Natural killer cell (primary cell): ENCODE measurements at regions of chr13 and their contacts with region 1.

Region 1: DNA sequence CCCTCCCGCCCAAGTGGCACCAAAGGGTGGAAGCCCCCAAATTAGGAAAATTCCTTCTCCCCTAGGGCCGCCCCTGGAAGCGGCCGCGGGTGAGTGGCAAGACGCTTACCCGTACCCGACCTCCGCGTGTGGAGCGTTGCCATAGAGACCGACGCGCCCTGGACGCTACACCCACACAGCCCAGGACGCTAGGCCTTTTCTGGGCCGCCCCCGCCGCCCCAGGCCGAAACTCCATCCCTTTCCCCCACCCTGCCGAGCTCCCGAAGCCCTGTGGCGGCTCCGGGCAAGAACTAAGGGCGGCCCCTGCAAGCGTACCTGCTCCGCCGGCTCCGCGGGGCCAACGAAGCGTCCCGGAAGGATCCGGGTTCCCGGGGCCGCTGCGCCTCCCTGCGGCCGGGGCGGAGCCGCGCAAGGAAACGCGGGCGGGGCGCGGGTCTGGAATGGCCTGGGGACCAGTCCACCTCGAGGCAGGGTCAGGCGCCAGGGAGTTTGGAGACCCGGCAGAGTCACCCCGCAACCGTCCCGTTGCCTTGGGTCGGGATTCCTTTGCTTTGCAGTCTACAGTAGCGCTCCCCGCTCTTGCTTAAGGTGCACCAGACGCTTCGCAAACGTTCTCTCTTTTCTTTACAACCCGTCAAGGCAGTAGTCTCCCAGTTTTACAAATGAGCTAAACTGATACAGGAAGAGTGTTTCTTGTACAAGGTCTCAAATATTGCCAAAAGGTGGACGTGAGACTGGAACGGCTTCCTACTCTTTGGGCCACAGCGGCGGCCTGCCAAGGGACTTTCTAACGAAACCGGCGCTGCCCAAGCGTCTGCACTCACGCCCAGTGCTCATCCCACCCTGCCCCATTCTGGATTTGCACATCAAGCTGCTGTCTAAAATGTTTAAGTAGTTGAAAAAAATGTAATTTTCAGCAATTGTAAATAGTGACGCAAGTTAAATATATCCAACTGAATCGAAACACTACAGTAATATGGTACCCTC is at the start of gene NEK5:
- DNase-seq: peak; percentile 41 to 69
- ATAC-seq: peak; percentile 67 to 81 (median 74)
- H3K4me3 ChIP-seq: peak within 1 kb of the TSS; percentile 48
- H3K4me3 Mint-ChIP-seq: peak within 1 kb of the TSS; percentile 88
- H3K27ac ChIP-seq: no peak within 1 kb of the TSS
- H3K27ac Mint-ChIP-seq: peak within 1 kb of the TSS in 1 of 2 donors; percentile 9
- H3K4me1 ChIP-seq: peaks cover 17% of the 10 kb centered on the region
- H3K4me1 Mint-ChIP-seq: peaks cover 12 to 22% of the 10 kb centered on the region in 2 donors
- H3K27me3 ChIP-seq: peaks cover 10% of the 10 kb centered on the region
- H3K27me3 Mint-ChIP-seq: peaks cover 13 to 18% of the 10 kb centered on the region in 2 donors
- CTCF ChIP-seq: peak; percentile 55
- total RNA-seq, gene NEK5: 0.13 TPM in 1 of 3 donors, not detected in the others

Region 2: DNA sequence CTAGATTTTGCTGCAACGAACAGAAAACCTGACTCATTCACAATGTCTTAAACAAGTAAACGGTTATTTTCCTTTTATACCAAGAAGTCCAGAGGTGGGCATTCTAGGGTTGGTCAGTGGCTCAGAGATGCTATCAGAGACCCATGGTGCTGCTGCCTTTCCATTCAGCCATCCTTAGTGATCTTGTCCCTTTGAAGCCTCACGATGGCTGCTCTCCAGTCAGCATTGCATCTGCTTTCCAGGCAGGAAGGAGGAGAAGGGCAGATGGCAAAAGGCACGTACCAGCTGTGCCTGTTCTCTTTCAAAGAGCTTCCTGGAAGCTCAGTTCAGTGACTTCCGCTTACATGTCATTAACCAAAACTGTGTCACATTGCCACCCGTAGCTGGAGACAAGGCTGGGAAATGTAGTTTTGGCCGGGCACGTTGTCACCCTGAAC is 514.6 kb before region 1 on chr13:
- intact Hi-C with region 1: no loop called
- DNase-seq: peak in 1 of 2 donors; percentile 75
- ATAC-seq: peak; percentile 73 to 95 (median 94)
- H3K4me3 ChIP-seq: peak overlapping the region; percentile 2
- H3K4me3 Mint-ChIP-seq: peak overlapping the region; percentile 85
- H3K27ac ChIP-seq: peak overlapping the region; percentile 56
- H3K27ac Mint-ChIP-seq: peak overlapping the region; percentile 85 to 92
- H3K4me1 ChIP-seq: peaks cover 4% of the 10 kb centered on the region
- H3K4me1 Mint-ChIP-seq: peaks cover 19 to 24% of the 10 kb centered on the region in 2 donors
- H3K27me3 ChIP-seq: no peaks in the 10 kb centered on the region
- H3K27me3 Mint-ChIP-seq: no peaks in the 10 kb centered on the region
- CTCF ChIP-seq: no peak

Region 3: DNA sequence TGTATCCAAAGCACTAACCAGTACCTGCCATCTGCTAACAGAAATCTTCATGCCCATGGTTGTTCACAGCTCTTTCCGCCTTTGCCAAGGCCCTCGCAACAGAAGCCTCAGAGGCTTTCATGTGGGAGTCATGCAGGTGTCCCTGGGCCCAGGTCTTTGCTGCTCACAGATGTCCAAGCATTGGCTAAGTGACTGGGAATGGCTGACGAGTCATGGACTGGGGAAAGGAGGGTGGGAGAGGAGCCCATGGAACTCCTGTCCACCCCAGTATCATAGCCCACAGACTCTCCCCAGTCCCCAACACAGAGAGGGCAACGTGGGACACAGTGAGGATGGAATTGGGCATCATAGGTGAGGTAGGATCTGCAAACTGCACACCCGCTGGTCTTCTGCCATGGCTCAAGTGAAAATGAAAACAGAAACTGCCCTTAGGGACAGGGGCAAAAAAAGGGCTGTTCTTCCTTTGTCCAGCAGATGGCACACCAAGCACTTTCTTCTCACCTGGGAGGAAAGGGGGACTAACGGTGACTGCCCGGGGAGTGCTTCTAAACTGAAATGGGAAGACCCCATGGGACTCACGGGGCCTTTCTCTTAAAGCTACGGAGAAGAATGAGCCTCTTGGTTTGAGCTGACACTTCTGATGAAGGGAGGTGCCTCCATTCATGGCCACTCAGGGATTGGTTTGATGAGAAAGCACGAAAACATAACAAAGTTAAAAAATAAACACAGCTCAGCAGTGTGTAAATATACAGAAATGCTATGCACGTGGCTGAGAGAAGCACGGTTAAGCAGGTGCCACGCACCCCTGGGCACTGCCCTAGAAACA is 314.0 kb before region 1 on chr13:
- intact Hi-C with region 1: loop called (anchors 1 kb)
- DNase-seq: peak; percentile 60 to 91
- ATAC-seq: peak; percentile 87 to 91 (median 88)
- H3K4me3 ChIP-seq: no peak overlapping the region
- H3K4me3 Mint-ChIP-seq: peak overlapping the region; percentile 21
- H3K27ac ChIP-seq: no peak overlapping the region
- H3K27ac Mint-ChIP-seq: peak overlapping the region; percentile 60 to 78
- H3K4me1 ChIP-seq: peaks cover 31% of the 10 kb centered on the region
- H3K4me1 Mint-ChIP-seq: peaks cover 18 to 23% of the 10 kb centered on the region in 2 donors
- H3K27me3 ChIP-seq: no peaks in the 10 kb centered on the region
- H3K27me3 Mint-ChIP-seq: peaks cover 7 to 9% of the 10 kb centered on the region in 2 donors
- CTCF ChIP-seq: peak; percentile 85

Region 4: GRCh38 chr13:51895906-51896888 is 232.8 kb before region 1 on chr13:
- intact Hi-C with region 1: loop called (anchors 5 kb)
- DNase-seq: peak in 1 of 2 donors; percentile 65
- ATAC-seq: peak in 2 of 3 donors; percentile 49 to 66
- H3K4me3 ChIP-seq: no peak overlapping the region
- H3K4me3 Mint-ChIP-seq: no peak overlapping the region
- H3K27ac ChIP-seq: no peak overlapping the region
- H3K27ac Mint-ChIP-seq: no peak overlapping the region
- H3K4me1 ChIP-seq: no peaks in the 10 kb centered on the region
- H3K4me1 Mint-ChIP-seq: no peaks in the 10 kb centered on the region
- H3K27me3 ChIP-seq: no peaks in the 10 kb centered on the region
- H3K27me3 Mint-ChIP-seq: peaks cover 15 to 31% of the 10 kb centered on the region in 2 donors
- CTCF ChIP-seq: peak; percentile 16

Region 5: DNA sequence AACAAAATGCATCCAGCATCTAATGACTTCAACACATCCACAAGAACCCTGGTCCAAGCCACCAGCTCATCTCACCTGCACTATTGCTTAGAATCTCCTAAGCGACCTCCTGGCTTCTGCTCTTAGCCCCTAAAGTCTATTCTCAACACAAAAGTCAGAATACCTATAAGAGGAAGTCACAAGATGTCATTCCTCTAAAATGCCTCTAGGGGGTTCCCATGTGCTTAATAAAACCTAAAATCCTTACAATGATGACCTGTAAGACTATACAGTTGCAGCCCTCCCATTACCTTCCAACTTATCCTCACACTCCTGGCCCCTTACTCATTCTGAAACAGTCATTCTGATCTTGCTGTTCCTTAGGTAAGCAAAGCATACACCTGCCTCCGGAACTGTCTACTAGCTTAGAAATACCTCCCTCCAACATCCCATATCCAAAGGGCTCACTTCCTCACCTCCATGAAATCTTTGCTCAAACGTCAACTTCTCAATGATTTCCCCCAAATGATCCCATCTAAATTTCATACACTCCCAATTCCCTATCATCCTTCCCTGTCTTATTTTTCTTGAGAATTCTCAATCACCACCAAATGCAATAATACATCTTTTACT is 127.8 kb before region 1 on chr13:
- intact Hi-C with region 1: loop called (anchors 1 kb)
- DNase-seq: peak in 1 of 2 donors; percentile 64
- ATAC-seq: peak; percentile 65 to 92 (median 87)
- H3K4me3 ChIP-seq: no peak overlapping the region
- H3K4me3 Mint-ChIP-seq: no peak overlapping the region
- H3K27ac ChIP-seq: no peak overlapping the region
- H3K27ac Mint-ChIP-seq: no peak overlapping the region
- H3K4me1 ChIP-seq: no peaks in the 10 kb centered on the region
- H3K4me1 Mint-ChIP-seq: no peaks in the 10 kb centered on the region
- H3K27me3 ChIP-seq: no peaks in the 10 kb centered on the region
- H3K27me3 Mint-ChIP-seq: peaks cover 16 to 44% of the 10 kb centered on the region in 2 donors
- CTCF ChIP-seq: peak; percentile 72

Region 6: GRCh38 chr13:52169839-52170238 is 40.8 kb after region 1 on chr13:
- intact Hi-C with region 1: no loop called
- DNase-seq: no peak
- ATAC-seq: no peak
- H3K4me3 ChIP-seq: no peak overlapping the region
- H3K4me3 Mint-ChIP-seq: no peak overlapping the region
- H3K27ac ChIP-seq: no peak overlapping the region
- H3K27ac Mint-ChIP-seq: no peak overlapping the region
- H3K4me1 ChIP-seq: no peaks in the 10 kb centered on the region
- H3K4me1 Mint-ChIP-seq: no peaks in the 10 kb centered on the region
- H3K27me3 ChIP-seq: no peaks in the 10 kb centered on the region
- H3K27me3 Mint-ChIP-seq: no peaks in the 10 kb centered on the region
- CTCF ChIP-seq: no peak